Activated CD4-positive, alpha-beta T cell treated with anti-CD3 and anti-CD28 coated beads, Interleukin-2, amount 10 ng/mL, durations not matched to agents 24 days and 14 days (primary cell): ENCODE measurements at regions of chr10 and their contacts with region 1.

Region 1: DNA sequence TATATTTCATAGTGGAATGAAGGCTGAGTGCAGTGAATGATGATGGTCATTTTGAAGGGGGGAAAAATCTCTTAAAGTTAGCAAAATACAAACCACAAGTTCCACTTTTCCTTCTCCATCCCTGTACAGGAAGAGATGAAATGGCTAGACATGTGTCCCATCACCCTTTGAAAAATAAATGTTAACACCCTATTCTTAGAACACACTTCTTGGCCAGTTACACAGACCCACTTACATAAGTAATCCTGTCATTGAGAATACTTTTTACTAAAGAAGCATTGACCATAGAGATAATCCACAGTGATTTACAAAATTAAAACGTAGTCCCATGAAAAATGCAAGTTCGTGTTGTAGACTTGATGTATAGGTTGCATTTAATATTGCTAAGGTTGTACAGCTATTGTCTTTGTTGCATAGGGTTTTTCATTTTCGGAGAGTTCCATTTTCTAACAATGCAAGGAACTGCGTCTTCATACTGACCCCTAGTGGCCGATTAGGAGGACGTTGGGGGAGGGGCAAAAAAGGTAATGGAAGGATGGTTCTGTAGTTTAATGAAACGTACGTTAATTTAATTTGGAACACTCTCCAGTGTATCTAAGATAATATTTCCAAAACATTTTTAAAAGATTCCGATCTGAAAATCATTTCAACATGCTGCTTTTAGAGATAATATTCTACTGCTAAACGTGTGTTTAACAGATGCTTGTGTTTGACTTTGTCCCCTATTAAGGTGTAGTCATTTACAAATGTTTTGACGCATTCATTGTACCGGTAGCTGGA is 60.9 kb downstream of the ARMC3 start:
- DNase-seq: peak; percentile 92
- H3K4me3 Mint-ChIP-seq: no peak overlapping the region
- H3K27ac Mint-ChIP-seq: no peak overlapping the region
- H3K4me1 Mint-ChIP-seq: peaks cover 8% of the 10 kb centered on the region
- H3K27me3 Mint-ChIP-seq: peaks cover 20% of the 10 kb centered on the region

Region 2: DNA sequence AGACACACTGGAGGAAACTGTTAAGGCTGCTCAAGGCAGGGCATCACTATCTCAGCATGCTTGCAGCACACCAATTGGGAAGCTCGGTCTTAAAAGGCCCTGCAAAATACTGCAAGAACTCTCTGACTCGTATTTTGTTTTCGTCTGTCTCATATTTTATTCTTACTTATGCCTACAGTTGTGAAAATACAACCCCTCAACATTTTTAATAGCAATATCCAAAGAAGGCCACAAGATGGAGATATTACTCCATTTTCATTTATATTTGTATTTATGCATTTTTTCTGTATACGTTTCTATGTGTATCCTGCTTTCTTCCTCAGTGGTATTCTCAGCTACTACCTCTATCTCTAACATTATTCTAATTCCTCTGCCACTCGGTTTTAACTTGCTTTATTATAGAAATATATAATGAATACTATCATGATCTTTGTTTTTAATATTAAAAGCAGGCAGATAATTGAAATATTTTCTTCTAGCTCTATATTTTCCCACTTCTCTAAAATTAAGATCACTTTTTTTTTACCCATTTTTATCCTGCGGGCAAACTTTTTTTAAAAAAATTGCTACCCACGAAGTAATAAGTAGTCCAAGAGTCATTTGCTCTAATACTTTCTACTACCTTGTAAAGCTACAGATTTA is 995.3 kb before region 1 on chr10:
- intact Hi-C with region 1: loop called (anchors 2 kb)
- DNase-seq: no peak
- H3K4me3 Mint-ChIP-seq: no peak overlapping the region
- H3K27ac Mint-ChIP-seq: no peak overlapping the region
- H3K4me1 Mint-ChIP-seq: peaks cover 10% of the 10 kb centered on the region
- H3K27me3 Mint-ChIP-seq: no peaks in the 10 kb centered on the region

Region 3: DNA sequence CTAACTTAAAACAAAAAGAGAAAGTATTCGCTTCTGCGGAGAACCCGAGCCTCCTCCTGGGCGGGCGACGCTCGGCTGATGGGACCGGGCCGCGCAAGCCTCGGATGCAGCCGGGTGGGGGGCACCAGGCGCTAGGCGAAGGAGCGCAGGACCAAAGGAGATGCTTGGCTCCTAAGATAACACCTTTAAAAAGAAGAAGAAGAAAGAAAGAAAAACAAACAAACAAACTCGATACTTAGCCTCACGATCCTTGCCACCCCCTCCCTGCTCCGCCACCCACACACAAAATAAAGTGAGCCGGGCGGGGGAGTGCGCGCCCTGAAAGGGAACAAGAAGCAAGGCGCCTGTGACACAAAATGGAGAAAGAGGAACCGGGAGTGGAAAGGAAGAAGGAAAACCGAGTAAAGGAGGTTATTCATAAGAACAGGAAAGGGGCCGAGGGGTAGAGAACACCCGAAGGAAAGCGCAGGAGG is 737.0 kb before region 1 on chr10:
- intact Hi-C with region 1: loop called (anchors 10 kb)
- DNase-seq: peak; percentile 91
- H3K4me3 Mint-ChIP-seq: peak overlapping the region; percentile 91
- H3K27ac Mint-ChIP-seq: peak overlapping the region; percentile 98
- H3K4me1 Mint-ChIP-seq: peaks cover 31% of the 10 kb centered on the region
- H3K27me3 Mint-ChIP-seq: peaks cover 14% of the 10 kb centered on the region

Region 4: GRCh38 chr10:22550732-22551131 is 438.0 kb before region 1 on chr10:
- intact Hi-C with region 1: loop called (anchors 1 kb)
- DNase-seq: peak; percentile 85
- H3K4me3 Mint-ChIP-seq: no peak overlapping the region
- H3K27ac Mint-ChIP-seq: no peak overlapping the region
- H3K4me1 Mint-ChIP-seq: peaks cover 11% of the 10 kb centered on the region
- H3K27me3 Mint-ChIP-seq: no peaks in the 10 kb centered on the region

Region 5: GRCh38 chr10:22597138-22597537 is 391.6 kb before region 1 on chr10:
- intact Hi-C with region 1: loop called (anchors 5 kb)
- DNase-seq: no peak
- H3K4me3 Mint-ChIP-seq: no peak overlapping the region
- H3K27ac Mint-ChIP-seq: peak overlapping the region; percentile 34
- H3K4me1 Mint-ChIP-seq: peaks cover 46% of the 10 kb centered on the region
- H3K27me3 Mint-ChIP-seq: no peaks in the 10 kb centered on the region